ENCODE measurements at regions of chr19 and their contacts with region 1.

Region 1: DNA sequence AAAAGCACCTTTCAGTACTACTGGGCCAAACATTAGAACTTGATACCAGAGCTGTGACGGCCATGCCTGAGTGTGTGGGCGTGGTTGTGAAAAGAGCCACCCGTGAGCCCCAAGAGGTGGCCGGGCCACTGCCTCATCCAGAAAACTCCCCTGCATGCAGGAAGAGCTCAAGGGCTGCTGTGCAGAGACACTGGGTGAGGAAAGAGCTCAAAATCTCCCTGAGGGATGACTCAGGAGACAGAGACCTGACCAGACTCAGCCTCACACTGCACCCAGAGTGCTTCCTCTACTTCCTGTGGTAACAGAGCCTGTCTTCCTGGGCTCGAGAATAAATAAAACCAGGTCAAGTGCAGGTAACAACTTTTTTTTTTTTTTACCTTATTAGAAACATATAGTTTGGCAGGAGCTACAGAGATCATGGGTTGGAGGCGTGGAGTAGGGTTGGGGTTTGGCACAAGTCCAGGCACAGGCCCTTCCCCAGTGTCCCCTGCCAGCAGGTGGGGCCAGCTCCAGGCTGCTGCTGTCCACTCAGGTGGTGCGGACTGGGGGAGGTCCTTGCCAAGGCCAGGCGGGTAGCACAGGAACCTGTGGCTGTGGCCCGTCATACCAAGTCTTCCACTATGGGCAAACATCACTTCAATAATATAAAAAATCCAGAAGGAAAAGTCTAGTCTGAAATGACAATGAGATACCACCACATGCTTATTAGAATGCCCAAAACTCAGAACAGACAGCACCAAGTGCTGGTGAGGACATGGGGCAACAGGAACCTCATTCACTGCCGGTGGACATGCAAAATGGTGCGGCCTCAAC is 25.5 kb downstream of the ELL start:
- DNase-seq: peak; percentile 94 to 98 (median 97)
- H3K4me3 ChIP-seq: peak overlapping the region in 1 of 3 experiments; percentile 29
- H3K4me3 Mint-ChIP-seq: peak overlapping the region; percentile 48 to 49
- H3K27ac ChIP-seq: peak overlapping the region; percentile 97 to 98
- H3K27ac Mint-ChIP-seq: peak overlapping the region; percentile 92 to 98 (median 95)
- H3K4me1 ChIP-seq: peaks cover 70 to 81% of the 10 kb centered on the region in 2 donors
- H3K4me1 Mint-ChIP-seq: peaks cover 84% of the 10 kb centered on the region
- H3K27me3 ChIP-seq: no peaks in the 10 kb centered on the region
- H3K27me3 Mint-ChIP-seq: peaks cover 0 to 2% (median 0%) of the 10 kb centered on the region in 3 donors
- CTCF ChIP-seq: peak; percentile 11

Region 2: DNA sequence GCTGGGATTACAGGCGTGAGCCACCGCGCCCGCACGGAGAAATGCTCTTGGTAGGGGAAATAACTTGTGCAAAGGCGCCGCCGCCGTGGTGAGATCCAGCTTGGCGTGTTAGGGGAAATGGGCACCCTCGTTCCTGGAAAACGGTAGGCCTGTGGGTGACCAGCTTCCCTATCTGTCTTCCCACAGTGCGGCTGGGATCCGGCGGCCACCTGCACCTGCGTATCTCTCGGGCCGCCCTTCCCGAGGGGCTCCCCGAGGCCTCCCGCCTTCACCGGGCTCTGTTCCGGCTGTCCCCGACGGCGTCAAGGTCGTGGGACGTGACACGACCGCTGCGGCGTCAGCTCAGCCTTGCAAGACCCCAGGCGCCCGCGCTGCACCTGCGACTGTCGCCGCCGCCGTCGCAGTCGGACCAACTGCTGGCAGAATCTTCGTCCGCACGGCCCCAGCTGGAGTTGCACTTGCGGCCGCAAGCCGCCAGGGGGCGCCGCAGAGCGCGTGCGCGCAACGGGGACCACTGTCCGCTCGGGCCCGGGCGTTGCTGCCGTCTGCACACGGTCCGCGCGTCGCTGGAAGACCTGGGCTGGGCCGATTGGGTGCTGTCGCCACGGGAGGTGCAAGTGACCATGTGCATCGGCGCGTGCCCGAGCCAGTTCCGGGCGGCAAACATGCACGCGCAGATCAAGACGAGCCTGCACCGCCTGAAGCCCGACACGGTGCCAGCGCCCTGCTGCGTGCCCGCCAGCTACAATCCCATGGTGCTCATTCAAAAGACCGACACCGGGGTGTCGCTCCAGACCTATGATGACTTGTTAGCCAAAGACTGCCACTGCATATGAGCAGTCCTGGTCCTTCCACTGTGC is 108.0 kb before region 1 on chr19:
- intact Hi-C with region 1: no loop called
- DNase-seq: peak; percentile 93 to 97 (median 96)
- H3K4me3 ChIP-seq: peak overlapping the region; percentile 13 to 68 (median 36)
- H3K4me3 Mint-ChIP-seq: peak overlapping the region; percentile 80 to 90
- H3K27ac ChIP-seq: peak overlapping the region; percentile 18 to 66
- H3K27ac Mint-ChIP-seq: peak overlapping the region; percentile 78 to 93 (median 90)
- H3K4me1 ChIP-seq: peaks cover 65 to 78% of the 10 kb centered on the region in 2 donors
- H3K4me1 Mint-ChIP-seq: peaks cover 68% of the 10 kb centered on the region
- H3K27me3 ChIP-seq: peaks cover 0 to 12% of the 10 kb centered on the region in 2 donors
- H3K27me3 Mint-ChIP-seq: peaks cover 3 to 35% (median 18%) of the 10 kb centered on the region in 3 donors
- CTCF ChIP-seq: peak; percentile 100

Region 3: GRCh38 chr19:18478569-18479311 is 17.6 kb before region 1 on chr19:
- intact Hi-C with region 1: loop called in 1 of 2 experiments (anchors 2 kb)
- DNase-seq: peak; percentile 98 to 99 (median 99)
- H3K4me3 ChIP-seq: peak overlapping the region in 2 of 3 experiments; percentile 14 to 58
- H3K4me3 Mint-ChIP-seq: peak overlapping the region; percentile 60 to 84
- H3K27ac ChIP-seq: peak overlapping the region; percentile 96 to 97
- H3K27ac Mint-ChIP-seq: peak overlapping the region; percentile 97 to 99 (median 99)
- H3K4me1 ChIP-seq: peaks cover 84 to 95% of the 10 kb centered on the region in 2 donors
- H3K4me1 Mint-ChIP-seq: peaks cover 82% of the 10 kb centered on the region
- H3K27me3 ChIP-seq: no peaks in the 10 kb centered on the region
- H3K27me3 Mint-ChIP-seq: peaks cover 0 to 3% (median 0%) of the 10 kb centered on the region in 3 donors
- CTCF ChIP-seq: no peak